GM23248 (cell line): ENCODE measurements at regions of chr14 and their contacts with region 1.

Region 1: DNA sequence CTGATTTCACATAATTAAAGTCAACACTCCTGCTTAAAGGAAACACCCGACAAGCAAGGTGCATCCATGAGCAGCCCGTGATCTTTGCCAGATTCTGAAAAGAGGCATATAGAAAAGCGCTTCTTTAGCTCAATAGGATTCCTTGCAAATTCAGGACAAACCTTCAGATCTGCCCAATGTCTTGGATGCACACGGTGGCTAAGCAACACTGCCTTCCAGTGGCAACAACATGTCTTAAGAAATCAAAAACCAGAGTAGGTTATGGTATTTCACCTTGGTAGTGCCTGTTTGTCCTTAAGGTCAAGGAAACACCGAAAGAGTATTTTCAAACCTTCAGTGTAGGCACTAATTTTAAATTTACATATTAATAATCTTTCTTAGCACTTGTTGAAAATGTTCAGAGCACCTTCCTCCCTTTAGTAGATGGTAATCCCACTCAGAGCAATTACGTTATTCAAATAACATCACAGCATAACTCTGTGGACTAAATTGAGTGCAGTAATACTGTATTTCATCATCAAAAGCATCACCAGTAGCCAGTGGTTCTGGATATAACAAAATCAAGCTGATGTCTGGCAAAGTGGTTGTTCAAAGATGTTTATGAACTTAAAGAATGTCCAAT is 58.0 kb upstream of the CDKN3 start:
- DNase-seq: peak; percentile 63
- H3K4me3 ChIP-seq: no peak overlapping the region
- H3K27ac ChIP-seq: no peak overlapping the region
- H3K4me1 ChIP-seq: no peaks in the 10 kb centered on the region
- H3K27me3 ChIP-seq: peaks cover 6% of the 10 kb centered on the region; the same call in 1 of the 2 replicates

Region 2: GRCh38 chr14:53539489-53540126 is 799.2 kb before region 1 on chr14:
- in situ Hi-C with region 1: loop called (anchors 10 kb)
- DNase-seq: peak; percentile 77
- H3K4me3 ChIP-seq: no peak overlapping the region
- H3K27ac ChIP-seq: no peak overlapping the region
- H3K4me1 ChIP-seq: no peaks in the 10 kb centered on the region
- H3K27me3 ChIP-seq: no peaks in the 10 kb centered on the region